Cardiac septum (tissue), 1 donor: ENCODE measurements at regions of chr2 and their contacts with region 1.

Region 1: GRCh38 chr2:100321181-100321865 is 978 bp downstream of the LONRF2 start:
- DNase-seq: no peak

Region 2: DNA sequence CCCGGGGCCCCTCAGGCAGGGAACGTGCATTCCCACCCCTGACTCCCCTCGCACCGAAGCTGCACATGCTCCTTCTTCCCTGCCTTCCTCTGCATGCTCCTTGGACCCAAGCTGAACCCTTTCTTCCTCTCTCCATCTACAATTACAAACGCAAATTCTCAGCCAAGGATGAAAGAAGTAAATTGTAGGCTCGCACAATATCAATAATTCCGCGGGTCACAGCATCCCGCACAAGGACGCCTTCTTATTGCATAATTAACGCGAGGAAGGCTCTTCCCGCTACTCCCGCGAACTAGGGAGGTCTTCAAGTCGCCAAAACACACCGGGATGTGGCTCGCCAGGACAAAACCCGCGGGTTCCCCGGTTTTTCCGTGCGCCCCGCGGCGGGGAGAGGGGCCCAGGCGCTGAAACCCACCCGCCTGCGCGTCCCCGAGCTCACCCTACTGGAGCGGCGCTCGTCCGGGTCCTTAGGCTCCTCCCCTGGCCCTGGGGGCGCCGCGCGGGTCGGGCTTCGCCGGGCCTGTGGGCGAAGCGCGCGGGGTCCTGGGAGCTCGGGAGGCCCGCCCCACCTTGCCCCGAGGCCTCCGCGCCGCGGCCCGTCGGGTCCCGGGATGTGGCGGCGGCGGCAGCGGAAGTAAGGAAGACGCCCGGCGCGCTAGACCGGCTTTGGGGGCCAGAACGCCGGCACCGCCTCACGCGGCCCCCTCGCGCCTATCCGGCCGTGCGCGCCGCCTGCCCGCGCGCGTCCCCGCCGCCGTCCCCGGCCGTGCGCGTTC is 95.8 kb after region 1 on chr2 and contains the start of gene CHST10:
- intact Hi-C with region 1: loop called (anchors 5 kb)
- DNase-seq: peak; percentile 79
- total RNA-seq, gene CHST10: 7.8 TPM

Region 3: DNA sequence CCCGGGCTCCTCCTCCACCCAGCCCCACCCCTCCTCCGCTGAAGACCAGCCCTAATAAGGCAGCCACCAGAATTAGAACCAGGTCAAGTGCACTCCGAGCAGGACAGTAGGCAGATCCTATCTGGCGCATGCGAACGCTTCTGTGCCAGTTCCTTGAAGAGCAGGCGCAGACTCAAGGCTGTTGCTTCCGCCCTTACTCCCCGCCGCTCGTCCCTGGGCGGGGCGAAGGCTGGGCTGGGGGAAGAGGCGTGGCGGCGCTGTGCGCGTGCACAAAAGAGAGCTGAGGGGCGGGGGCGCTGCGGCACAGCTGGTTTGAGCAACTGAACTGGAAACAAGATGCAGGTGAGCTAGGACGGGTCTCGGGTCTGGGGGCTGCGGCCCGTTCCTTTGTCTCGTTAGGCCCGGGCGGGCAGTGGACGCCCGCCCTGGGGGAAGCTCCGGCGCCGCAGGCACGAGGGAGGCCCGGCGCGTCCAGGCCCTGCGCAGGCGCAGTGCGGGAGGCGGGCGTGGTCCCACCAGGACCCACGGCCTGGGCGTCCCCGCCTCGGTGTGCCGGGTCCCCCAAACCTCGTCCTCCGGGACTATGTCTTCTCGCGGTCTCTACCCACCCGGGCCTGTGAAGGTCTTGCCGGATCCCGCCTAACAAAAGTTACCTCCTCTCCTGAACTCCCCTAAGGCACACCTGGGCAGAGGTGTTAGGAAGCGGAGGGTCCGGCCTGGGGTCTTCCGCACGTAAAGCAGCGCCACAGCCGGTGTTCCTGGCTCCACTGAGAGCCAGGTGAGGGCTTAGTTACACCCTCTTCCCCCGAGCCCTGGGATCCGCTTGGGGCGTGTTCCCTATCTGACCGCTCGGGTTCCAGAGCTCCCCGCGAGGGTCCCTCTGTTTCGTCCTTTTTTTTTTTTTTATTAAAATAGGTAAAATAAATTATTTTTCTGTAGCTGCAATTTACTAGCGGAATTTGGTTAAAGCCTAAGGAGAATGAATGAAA is 241.7 kb after region 1 on chr2 and contains the start of gene PDCL3:
- intact Hi-C with region 1: loop called (anchors 5 kb)
- DNase-seq: peak; percentile 98
- total RNA-seq, gene PDCL3: 26.7 TPM